HepG2 (cell line): ENCODE measurements at regions of chr10 and their contacts with region 1.

Region 1: GRCh38 chr10:79316671-79317431 is 30.4 kb upstream of the PPIF start:
- DNase-seq: peak; percentile 35
- ATAC-seq: peak; percentile 53
- H3K4me3 ChIP-seq: no peak overlapping the region; a peak in 1 of 6 replicates
- H3K27ac ChIP-seq: no peak overlapping the region
- H3K4me1 ChIP-seq: peaks cover 26% of the 10 kb centered on the region
- H3K27me3 ChIP-seq: no peaks in the 10 kb centered on the region; a peak in 1 of 5 replicates
- CTCF ChIP-seq: peak; percentile 18; the same call in 1 of the 2 replicates
- EP300 ChIP-seq: no peak
- POLR2A ChIP-seq: peak; percentile 29 to 56; a peak in 2 of 4 replicates
- RAD21 ChIP-seq: no peak

Region 2: GRCh38 chr10:79331709-79332108 is 14.9 kb after region 1 on chr10:
- CTCF ChIA-PET with region 1: no interaction called
- POLR2A ChIA-PET with region 1: interaction called, 8 read pairs
- in situ Hi-C with region 1: no loop called
- intact Hi-C with region 1: loop called (anchors 2 kb)
- DNase-seq: no peak
- ATAC-seq: no peak
- H3K4me3 ChIP-seq: no peak overlapping the region
- H3K27ac ChIP-seq: no peak overlapping the region
- H3K4me1 ChIP-seq: peaks cover 53% of the 10 kb centered on the region
- H3K27me3 ChIP-seq: no peaks in the 10 kb centered on the region
- CTCF ChIP-seq: no peak
- EP300 ChIP-seq: no peak
- POLR2A ChIP-seq: no peak
- RAD21 ChIP-seq: no peak